Posterior cingulate gyrus (tissue), 11 donors: ENCODE measurements at regions of chr10 and their contacts with region 1.

Region 1: DNA sequence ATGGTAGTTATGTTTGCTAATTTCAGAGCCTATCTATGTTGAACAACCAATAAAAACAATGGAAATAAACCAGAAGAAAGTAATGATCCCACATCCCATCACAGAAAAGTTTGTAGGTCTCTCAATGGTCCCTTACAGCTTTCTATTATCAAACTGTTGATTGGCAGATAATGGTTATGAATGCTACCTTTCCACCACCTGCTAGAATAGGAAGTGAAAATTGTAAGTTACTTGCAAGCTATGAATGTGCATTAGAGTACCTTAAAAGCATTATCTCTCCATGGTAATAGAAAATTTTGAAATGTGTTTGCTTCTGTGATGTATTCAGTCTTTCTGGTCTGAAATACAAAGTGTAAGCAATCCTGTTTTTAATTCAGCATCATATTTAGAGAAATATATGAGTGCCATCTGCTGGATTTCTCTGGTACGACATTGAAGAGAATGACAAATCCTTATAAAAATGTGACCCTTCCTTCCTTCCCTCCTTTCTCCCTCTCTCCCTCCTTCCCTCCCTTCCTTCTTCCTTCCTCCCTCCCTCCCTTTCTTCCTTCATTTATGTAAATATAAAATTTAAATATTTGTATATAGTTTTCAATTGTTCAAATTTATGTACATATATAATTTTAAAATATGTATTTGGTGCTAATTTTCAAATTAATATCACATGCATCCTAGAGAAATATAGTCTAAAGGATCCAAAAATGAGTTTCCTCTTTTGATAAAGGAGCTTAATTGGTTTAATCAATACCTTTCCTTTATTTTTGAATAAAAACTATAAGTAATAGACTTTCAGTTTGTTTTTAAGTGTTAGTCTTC is 41.4 kb upstream of the PNLIPRP3 start:
- DNase-seq: no peak

Region 2: DNA sequence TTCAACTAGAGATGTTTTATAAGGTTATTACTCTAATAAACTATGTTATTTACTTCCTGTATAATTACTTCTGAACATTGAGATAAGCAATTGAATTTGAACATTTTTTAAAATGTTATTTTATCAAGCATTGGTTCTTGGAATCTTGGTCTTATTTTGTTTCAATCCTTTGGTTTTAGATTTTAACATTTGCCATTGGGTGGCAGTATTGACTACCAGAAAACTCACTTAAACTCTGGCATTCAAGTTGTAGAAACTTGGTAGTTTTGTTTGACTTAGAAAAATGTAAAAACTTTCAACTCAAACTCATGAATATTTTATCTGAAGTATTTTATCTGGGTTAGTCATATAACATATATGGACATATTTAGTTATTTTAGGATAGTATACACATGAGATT is 1244.9 kb before region 1 on chr10:
- intact Hi-C with region 1: loop called (anchors 10 kb)
- DNase-seq: no peak

Region 3: GRCh38 chr10:115171392-115171960 is 1214.7 kb before region 1 on chr10:
- intact Hi-C with region 1: loop called (anchors 2 kb)
- DNase-seq: no peak

Region 4: DNA sequence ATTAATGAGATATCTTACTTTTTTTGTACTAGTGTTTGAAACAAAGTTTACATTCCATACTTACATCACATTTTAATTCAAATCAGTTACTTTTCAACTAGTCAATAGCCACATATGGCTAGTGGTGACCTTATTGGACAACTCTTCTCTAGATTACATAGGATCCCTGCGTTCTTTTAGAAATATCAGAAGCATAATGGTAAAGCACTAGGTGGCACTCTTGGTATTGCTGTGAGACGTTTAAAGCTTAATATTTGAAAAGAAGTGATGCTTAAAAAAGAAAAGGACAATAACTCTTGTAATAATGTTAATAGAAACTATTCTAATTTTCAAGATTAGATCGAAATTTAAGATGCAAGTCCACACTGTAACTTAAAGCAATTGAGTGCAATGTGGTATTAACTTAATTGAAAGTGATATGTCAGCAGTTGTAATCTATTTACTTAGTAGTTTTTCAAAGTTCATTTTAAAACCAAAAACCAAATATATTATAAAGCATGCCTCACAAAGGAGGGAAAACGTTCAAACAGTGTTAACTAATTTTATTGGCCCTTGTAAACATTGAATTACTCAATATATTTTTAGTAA is 953.9 kb before region 1 on chr10:
- intact Hi-C with region 1: loop called (anchors 10 kb)
- DNase-seq: no peak

Region 5: DNA sequence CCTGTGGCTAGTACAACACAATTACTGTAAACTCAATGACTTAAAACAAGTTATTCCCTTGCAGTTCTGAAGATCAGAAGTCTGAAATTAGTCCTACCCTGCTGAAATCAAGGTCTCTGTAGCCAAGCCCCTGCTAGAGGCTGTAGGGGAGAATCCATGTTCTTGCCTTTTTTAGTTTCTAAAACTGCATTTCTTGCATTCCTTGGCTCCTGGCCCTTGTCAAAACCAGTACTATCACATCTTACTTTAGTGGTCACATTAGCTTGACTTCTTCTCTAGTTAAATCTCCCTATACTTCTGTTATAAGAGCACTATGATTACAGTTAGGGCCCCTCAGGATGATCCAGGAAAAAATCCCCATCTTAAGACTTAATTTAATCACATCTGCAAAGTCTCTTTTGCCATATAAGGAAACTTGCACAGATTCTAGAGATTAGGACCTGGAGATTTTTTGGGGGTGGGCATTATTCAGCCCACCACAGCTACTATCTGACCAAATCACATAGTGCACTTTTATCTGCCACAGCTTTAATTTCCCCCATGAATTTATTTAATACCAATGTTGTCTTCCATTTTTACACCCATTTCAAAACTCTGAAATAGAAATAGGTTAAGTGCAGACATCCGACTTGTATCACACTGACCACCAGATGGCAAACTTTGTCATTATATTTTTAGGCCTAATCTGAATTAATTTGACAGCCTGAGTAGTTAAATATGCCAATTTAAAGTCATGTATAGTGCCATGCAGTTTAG is 680.0 kb before region 1 on chr10:
- intact Hi-C with region 1: loop called (anchors 10 kb)
- DNase-seq: no peak

Region 6: DNA sequence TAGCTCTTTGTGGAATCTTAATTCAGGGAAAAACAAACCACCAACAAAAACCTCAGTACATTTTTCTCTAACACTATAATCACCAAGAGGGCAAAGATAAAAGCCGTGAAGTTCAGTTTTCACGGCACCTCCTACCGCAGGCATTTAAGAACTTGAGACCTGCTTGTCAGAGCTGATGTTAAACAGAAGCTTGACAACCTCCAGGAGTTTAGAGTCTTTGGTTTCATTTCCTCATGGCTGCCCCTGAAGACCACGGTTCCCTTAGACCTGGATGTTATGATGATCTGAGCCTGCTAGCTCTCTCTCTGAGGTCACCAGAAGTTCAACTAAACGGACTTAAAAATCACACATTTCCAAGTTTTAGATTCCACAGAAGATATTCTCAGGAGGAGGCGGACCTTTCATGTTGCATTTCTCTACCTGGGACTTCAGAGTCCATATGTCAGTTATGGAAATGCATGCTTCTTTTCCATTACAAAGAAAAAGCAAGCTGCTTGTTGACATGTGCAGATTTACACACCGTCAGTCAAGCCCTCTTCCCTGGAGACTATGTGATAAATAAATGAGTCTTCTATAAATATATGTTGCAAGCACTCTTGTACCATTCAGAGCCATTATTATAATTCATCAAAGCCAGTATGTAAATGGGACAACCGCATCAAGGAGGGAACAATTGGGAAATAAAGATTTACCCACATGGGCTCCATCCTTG is 371.2 kb before region 1 on chr10:
- intact Hi-C with region 1: no loop called
- DNase-seq: no peak